GM18951 (cell line): ENCODE measurements at regions of chr2 and their contacts with region 1.

Region 1: GRCh38 chr2:201182650-201183364 is at the start of gene CASP10:
- POLR2A ChIP-seq: peak; percentile 44

Region 2: GRCh38 chr2:201228271-201228913 is 45.6 kb after region 1 on chr2:
- in situ Hi-C with region 1: loop called (anchors 5 kb)
- POLR2A ChIP-seq: no peak

Region 3: GRCh38 chr2:201600906-201601305 is 418.1 kb after region 1 on chr2:
- in situ Hi-C with region 1: no loop called
- POLR2A ChIP-seq: no peak